ENCODE measurements at regions of chr5 and their contacts with region 1.

Region 1: GRCh38 chr5:122999945-123000563 is 36.5 kb downstream of the PPIC start:
- DNase-seq: peak; percentile 71
- ATAC-seq: no peak
- H3K4me3 Mint-ChIP-seq: no peak overlapping the region
- H3K27ac Mint-ChIP-seq: no peak overlapping the region
- H3K4me1 Mint-ChIP-seq: no peaks in the 10 kb centered on the region
- H3K27me3 Mint-ChIP-seq: no peaks in the 10 kb centered on the region

Region 2: DNA sequence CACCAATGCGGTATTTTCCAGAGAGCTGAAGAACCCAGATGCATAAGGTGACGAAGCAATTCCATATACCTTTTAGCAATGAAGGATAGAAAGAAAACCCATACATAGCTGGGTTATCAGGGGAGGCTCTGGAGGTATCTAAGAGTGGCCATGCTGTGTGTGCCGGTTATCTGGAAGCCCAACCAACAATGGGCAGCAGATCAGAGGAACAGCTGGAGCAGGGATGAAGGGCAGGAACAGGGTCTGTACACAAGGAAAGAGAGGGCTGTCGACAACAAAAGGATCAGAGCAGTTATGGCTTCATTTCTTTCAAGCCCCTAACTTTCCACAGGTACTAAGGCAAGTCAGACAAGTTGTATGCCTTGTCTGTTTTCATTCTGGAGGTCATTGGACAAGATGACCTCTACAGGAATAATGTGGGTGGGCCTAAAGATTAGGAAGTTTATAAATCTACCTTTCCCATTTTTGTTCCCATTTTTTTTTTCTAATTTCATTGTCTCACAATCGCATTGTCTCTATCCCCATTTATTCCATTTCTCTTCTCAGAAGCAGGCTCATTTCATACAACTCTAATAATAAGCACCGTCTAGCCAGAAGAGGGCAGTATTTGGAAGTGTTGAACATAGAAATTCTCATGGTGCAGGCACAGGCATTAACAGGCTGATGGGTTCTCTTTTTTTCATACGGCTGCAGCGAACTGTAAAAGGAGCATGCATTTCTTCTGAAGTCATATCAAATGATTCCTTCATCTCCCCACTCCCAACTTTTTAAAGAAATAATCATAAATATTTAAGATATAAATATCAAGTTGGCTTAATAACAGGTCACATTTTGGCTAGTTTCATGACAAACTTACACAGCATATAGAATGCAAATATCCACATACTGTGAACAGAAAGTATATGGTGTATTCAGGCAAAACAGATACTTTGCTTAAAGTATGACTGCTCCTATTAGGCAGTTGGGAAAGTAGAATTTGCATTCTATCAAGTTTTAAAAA is 807.3 kb before region 1 on chr5:
- CTCF ChIA-PET with region 1: no interaction called
- POLR2A ChIA-PET with region 1: no interaction called
- intact Hi-C with region 1: loop called in 1 of 2 experiments (anchors 2 kb)
- DNase-seq: no peak
- ATAC-seq: peak; percentile 63
- H3K4me3 Mint-ChIP-seq: no peak overlapping the region
- H3K27ac Mint-ChIP-seq: no peak overlapping the region
- H3K4me1 Mint-ChIP-seq: no peaks in the 10 kb centered on the region
- H3K27me3 Mint-ChIP-seq: peaks cover 13% of the 10 kb centered on the region

Region 3: DNA sequence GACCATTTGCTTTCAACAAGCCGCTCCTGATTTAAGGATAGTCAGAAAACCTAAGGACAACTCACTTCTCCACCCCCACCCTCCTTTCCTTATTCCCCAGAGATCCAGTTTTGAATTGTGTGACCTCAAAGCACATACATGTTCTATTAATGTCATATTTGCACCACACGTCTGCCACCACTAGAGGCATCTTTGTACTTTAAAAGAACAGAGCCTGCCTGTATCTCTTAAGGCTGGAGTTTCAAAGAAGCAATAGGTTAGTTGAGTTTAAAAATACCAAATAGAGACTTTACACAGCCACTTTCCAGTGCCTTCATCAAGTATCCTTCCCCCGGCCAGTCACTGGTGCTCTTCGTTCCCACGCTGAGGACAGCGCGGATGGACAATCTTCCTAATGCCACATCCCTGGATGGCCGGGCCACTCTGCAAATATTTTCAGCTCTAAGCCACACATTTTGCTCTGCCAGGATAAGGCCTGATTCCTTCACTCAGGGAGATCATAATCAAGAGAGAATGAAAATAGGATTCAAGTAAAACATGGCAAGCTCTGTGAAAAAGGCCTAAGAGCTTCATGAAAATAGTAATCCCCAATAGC is 541.7 kb before region 1 on chr5:
- CTCF ChIA-PET with region 1: interaction called, 3 read pairs
- POLR2A ChIA-PET with region 1: no interaction called
- intact Hi-C with region 1: loop called in 1 of 2 experiments (anchors 1 kb)
- DNase-seq: no peak
- ATAC-seq: no peak
- H3K4me3 Mint-ChIP-seq: no peak overlapping the region
- H3K27ac Mint-ChIP-seq: no peak overlapping the region
- H3K4me1 Mint-ChIP-seq: no peaks in the 10 kb centered on the region
- H3K27me3 Mint-ChIP-seq: peaks cover 2% of the 10 kb centered on the region

Region 4: GRCh38 chr5:122515709-122516431 is 484.2 kb before region 1 on chr5:
- CTCF ChIA-PET with region 1: no interaction called
- POLR2A ChIA-PET with region 1: no interaction called
- intact Hi-C with region 1: loop called (anchors 2 kb)
- DNase-seq: peak; percentile 23
- ATAC-seq: no peak
- H3K4me3 Mint-ChIP-seq: no peak overlapping the region
- H3K27ac Mint-ChIP-seq: no peak overlapping the region
- H3K4me1 Mint-ChIP-seq: no peaks in the 10 kb centered on the region
- H3K27me3 Mint-ChIP-seq: peaks cover 5% of the 10 kb centered on the region

Region 5: DNA sequence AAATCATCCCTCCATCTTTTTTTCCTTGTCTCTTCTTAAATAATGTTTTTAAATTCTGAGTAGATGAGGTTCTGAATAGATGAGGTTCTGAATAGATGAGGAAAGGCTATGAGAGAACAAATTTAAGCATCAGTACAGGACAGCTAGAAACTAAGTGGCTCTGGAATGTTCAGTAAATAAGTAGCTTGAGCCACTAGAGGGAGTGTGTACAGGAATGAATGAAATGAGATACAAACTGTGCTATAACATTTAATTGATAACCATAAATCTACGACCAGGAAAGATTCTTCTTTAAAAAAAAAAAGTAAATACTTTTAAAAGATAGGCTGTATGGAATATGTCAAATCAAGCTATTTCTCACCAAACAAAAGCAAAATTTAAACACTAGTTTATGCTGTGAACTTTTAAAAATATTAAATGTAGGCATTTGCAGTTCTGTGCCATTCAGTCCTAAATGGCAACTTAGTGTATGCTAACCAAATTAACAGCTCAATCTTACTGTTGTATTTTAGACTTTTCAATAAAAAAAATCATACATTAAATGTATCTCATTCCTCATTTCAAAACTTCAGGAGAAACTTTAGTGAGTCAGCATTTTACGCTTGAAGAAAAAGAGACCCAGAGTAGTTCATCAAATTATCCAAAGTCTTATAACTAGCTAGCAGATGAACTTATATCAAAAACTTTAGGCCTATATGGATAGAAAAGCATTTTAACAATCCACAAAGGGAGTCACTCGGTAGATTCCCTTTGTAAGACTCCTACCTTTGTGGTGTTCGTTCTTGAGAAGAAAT is 295.6 kb before region 1 on chr5:
- CTCF ChIA-PET with region 1: no interaction called
- POLR2A ChIA-PET with region 1: no interaction called
- intact Hi-C with region 1: loop called in 1 of 2 experiments (anchors 2 kb)
- DNase-seq: no peak
- ATAC-seq: no peak
- H3K4me3 Mint-ChIP-seq: no peak overlapping the region
- H3K27ac Mint-ChIP-seq: no peak overlapping the region
- H3K4me1 Mint-ChIP-seq: peaks cover 3% of the 10 kb centered on the region
- H3K27me3 Mint-ChIP-seq: peaks cover 8% of the 10 kb centered on the region

Region 6: DNA sequence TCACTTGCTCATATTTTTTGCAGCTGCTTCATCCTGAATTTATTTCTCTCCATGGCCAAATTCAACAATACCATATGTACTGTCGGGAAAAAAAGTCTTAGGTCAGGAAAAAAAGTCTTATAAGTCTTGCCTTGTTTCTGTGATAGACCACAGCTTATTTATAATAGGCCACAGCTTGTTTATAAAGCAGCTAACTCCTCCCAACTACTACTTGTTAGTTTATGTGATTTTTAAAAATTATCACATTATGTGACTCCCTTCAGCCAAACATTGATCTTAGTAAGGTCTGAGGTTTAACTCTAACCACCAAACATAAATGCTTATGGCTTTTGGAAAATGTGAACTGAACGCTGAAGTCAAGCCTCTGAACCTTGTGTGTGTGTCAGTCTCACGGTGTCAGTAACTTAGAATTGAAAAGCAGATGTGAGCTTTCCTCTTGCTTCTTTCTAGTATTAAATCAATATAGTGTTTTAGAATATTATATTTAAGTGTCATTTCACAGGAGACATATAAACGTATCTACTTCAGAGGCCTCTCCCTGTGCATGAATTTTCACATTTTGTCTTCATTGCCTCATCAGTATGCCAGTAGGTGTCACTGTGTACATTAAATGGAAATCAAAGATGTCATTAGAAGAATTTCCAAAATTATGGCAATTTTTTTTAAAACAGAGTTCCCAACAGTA is 103.3 kb before region 1 on chr5:
- CTCF ChIA-PET with region 1: interaction called, 3 read pairs
- POLR2A ChIA-PET with region 1: no interaction called
- intact Hi-C with region 1: loop called in 1 of 2 experiments (anchors 1 kb)
- DNase-seq: no peak
- ATAC-seq: no peak
- H3K4me3 Mint-ChIP-seq: no peak overlapping the region
- H3K27ac Mint-ChIP-seq: no peak overlapping the region
- H3K4me1 Mint-ChIP-seq: peaks cover under 1% of the 10 kb centered on the region
- H3K27me3 Mint-ChIP-seq: no peaks in the 10 kb centered on the region